Vagina (tissue), 2 donors: ENCODE measurements at regions of chr1 and their contacts with region 1.

Region 1: GRCh38 chr1:86774305-86775295 is 70.2 kb downstream of the SH3GLB1 start:
- DNase-seq: peak in 1 of 2 donors; percentile 95
- H3K4me3 ChIP-seq: no peak overlapping the region
- H3K27ac ChIP-seq: peak overlapping the region; percentile 61
- H3K4me1 ChIP-seq: peaks cover 25% of the 10 kb centered on the region
- H3K27me3 ChIP-seq: no peaks in the 10 kb centered on the region
- CTCF ChIP-seq: no peak
- POLR2A ChIP-seq: no peak

Region 2: GRCh38 chr1:86788300-86789206 is 14.0 kb after region 1 on chr1:
- intact Hi-C with region 1: loop called (anchors 1 kb)
- DNase-seq: no peak
- H3K4me3 ChIP-seq: no peak overlapping the region
- H3K27ac ChIP-seq: peak overlapping the region; percentile 58
- H3K4me1 ChIP-seq: peaks cover 23% of the 10 kb centered on the region
- H3K27me3 ChIP-seq: no peaks in the 10 kb centered on the region
- CTCF ChIP-seq: no peak
- POLR2A ChIP-seq: no peak